ENCODE measurements at regions of chr1 and their contacts with region 1.

Region 1: GRCh38 chr1:228073857-228074545 is 8.5 kb upstream of the ARF1 start:
- DNase-seq: no peak
- H3K4me3 ChIP-seq: no peak overlapping the region
- H3K27ac ChIP-seq: no peak overlapping the region
- H3K4me1 ChIP-seq: no peaks in the 10 kb centered on the region
- H3K27me3 ChIP-seq: peaks cover 0 to 2% of the 10 kb centered on the region in 2 experiments
- CTCF ChIP-seq: peak in 1 of 2 donors; percentile 14
- POLR2A ChIP-seq: no peak

Region 2: DNA sequence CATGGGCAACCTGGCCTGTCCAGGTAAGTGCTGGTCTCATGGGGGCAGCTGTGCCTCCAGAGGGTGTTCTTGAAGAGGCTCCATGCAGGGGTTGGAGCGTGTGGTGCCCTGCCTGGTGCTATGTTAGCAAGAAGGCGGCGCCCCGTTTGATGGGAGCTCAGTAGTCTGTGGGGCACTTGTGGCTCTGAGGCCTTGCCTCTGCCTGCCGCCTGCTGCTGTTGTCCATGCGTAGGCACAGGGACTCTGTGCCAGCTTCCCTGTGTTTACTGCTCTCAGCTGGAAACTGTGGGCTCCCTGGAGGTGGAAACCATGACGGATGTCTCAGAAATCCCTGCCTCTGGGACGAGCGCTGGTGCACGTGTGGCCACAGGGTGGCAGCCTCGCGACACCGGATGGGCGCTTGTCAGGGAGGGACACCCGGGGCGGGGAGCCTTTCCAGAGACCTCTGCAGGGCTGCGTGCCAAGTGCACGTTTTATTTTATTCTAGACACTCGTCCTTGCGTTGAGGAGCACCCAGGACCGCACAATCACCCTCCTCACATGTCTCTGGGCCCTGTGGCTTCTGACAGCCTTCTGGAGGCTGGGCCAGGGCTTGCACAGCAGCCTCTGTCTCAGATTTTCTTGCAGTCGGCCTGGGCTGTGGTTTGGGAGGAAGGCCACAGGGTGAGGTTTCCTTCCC is 311.6 kb before region 1 on chr1:
- CTCF ChIA-PET with region 1: no interaction called
- POLR2A ChIA-PET with region 1: no interaction called
- dilution Hi-C with region 1: no loop called
- intact Hi-C with region 1: loop called (anchors 5 kb)
- DNase-seq: peak; percentile 76
- H3K4me3 ChIP-seq: no peak overlapping the region
- H3K27ac ChIP-seq: no peak overlapping the region
- H3K4me1 ChIP-seq: peaks cover 8% of the 10 kb centered on the region
- H3K27me3 ChIP-seq: no peaks in the 10 kb centered on the region
- CTCF ChIP-seq: peak; percentile 77 to 89
- POLR2A ChIP-seq: no peak

Region 3: DNA sequence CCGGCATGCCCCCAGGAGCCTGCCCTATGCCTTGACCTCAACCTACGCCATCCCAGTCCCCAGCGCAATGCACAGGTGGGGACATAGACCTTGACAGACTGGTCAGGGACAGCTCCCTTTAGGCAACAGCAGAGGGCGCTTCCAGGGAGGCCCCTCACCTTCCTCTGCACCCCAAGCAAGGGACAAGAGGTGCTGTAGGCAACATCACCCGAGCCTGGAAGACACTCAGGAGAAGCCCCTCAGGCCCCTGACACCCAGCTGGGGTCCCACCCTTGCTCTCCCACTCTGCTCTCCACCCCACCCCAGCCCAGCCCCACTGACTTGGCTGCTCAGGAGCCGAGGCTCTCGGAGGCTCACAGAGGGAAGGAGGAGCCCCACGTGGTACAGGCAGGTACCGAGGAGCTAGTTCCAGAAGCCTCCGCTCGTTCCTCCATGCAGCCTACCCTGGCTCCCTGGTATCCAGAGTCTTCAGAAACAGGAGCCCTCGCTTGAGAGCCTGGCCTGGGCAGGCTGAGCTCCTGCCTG is 69.6 kb before region 1 on chr1:
- CTCF ChIA-PET with region 1: interaction called, 24 read pairs
- POLR2A ChIA-PET with region 1: interaction called, 3 read pairs
- dilution Hi-C with region 1: no loop called
- intact Hi-C with region 1: loop called (anchors 5 kb)
- DNase-seq: no peak
- H3K4me3 ChIP-seq: no peak overlapping the region
- H3K27ac ChIP-seq: no peak overlapping the region
- H3K4me1 ChIP-seq: no peaks in the 10 kb centered on the region
- H3K27me3 ChIP-seq: peaks cover 41 to 46% of the 10 kb centered on the region in 2 experiments
- CTCF ChIP-seq: peak; percentile 8 to 48
- POLR2A ChIP-seq: no peak

Region 4: DNA sequence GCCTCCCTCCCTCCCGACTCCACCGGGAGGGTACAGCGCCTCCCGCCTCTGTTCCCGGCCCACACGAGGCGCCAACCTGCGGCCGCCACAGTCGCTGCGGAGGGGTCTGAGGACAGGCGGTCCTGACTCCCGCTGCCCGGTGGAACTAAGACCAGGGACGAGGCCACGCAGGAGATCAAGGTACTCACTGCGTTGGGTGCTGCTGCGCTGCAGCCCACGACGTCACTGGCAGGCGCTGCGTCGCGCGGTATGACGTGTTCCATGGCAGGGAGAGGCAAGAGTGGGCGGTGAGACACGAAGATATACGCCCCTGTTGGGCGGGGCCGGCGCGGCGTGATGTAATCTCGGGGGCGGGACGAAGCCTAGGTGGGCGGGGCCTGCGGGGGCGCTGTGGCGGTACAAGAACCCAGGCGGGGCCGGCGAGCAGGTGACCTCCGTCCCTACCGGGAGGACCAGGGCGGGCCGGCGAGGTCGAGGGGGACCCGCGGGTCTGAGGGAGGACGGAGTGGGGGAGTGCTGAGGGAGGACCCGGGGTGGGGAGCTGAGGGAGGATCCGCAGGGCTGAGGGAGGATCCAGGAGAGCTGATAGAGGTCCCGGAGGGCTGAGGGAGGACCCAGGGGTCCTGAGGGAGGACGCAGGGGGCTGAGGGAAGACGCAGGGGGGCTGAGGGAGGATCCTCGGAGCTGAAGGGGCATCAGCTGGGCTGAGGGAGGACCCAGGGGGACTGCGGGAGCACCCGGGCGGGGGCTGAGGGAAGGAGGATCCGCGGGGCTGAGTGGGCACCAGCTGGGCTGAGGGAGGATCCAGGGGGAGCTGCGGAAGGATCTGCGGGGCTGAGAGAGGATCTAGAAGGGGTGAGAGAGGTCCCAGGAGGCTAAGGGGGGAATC is 35.3 kb after region 1 on chr1 and contains the start of gene MRPL55:
- CTCF ChIA-PET with region 1: no interaction called
- POLR2A ChIA-PET with region 1: no interaction called
- dilution Hi-C with region 1: no loop called
- intact Hi-C with region 1: no loop called
- DNase-seq: peak; percentile 98
- H3K4me3 ChIP-seq: peak within 1 kb of the TSS; percentile 29 to 92 (median 63)
- H3K27ac ChIP-seq: peak within 1 kb of the TSS; percentile 32
- H3K4me1 ChIP-seq: peaks cover 13% of the 10 kb centered on the region
- H3K27me3 ChIP-seq: no peaks in the 10 kb centered on the region
- CTCF ChIP-seq: no peak
- POLR2A ChIP-seq: peak; percentile 82
- total RNA-seq, gene MRPL55: 57.0 and 58.7 TPM in 2 replicates